Pancreas (tissue), 10 donors: ENCODE measurements at regions of chr3 and their contacts with region 1.

Region 1: GRCh38 chr3:157201648-157202278 is 41.8 kb upstream of the CCNL1 start:
- DNase-seq: no peak
- ATAC-seq: peak; percentile 53 to 87 (median 84)
- H3K4me3 ChIP-seq: no peak overlapping the region
- H3K27ac ChIP-seq: no peak overlapping the region
- H3K4me1 ChIP-seq: peaks cover 0 to 3% (median 0%) of the 10 kb centered on the region in 3 donors
- H3K27me3 ChIP-seq: no peaks in the 10 kb centered on the region
- CTCF ChIP-seq: peak; percentile 13 to 50 (median 34)

Region 2: DNA sequence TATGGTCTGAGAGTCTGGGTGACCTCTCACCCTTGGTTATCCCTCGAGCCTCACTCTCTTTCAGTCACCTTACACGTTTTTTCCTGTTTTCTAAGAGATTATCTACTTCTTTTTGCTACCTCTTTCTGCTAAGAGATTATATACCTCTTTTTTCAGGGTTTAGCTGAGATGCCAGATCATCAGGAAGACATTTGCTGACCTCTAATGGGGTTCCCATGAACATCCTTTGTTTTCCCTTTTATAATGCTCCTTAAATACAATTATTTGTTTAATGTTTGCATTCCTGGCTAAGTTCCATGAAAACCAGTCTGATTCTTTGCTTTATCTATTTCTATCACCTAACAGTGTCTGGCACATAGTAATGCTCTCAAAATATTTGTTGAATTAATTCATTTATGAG is 336.0 kb before region 1 on chr3:
- intact Hi-C with region 1: no loop called
- DNase-seq: no peak
- ATAC-seq: no peak
- H3K4me3 ChIP-seq: no peak overlapping the region
- H3K27ac ChIP-seq: no peak overlapping the region
- H3K4me1 ChIP-seq: no peaks in the 10 kb centered on the region
- H3K27me3 ChIP-seq: no peaks in the 10 kb centered on the region
- CTCF ChIP-seq: no peak

Region 3: GRCh38 chr3:157311633-157312375 is 110.0 kb after region 1 on chr3:
- intact Hi-C with region 1: no loop called
- DNase-seq: no peak
- ATAC-seq: peak in 1 of 4 donors; percentile 53
- H3K4me3 ChIP-seq: no peak overlapping the region
- H3K27ac ChIP-seq: no peak overlapping the region
- H3K4me1 ChIP-seq: peaks cover 0 to 4% (median 0%) of the 10 kb centered on the region in 3 donors
- H3K27me3 ChIP-seq: no peaks in the 10 kb centered on the region
- CTCF ChIP-seq: no peak

Region 4: GRCh38 chr3:157493627-157494550 is 292.1 kb after region 1 on chr3:
- intact Hi-C with region 1: loop called in 2 of 3 experiments (anchors 10 kb)
- DNase-seq: no peak
- ATAC-seq: peak in 3 of 4 donors; percentile 65 to 75 (median 66)
- H3K4me3 ChIP-seq: no peak overlapping the region
- H3K27ac ChIP-seq: no peak overlapping the region
- H3K4me1 ChIP-seq: peaks cover 0 to 4% (median 0%) of the 10 kb centered on the region in 3 donors
- H3K27me3 ChIP-seq: no peaks in the 10 kb centered on the region
- CTCF ChIP-seq: peak; percentile 37 to 60 (median 51)